PC-9 (cell line): ENCODE measurements at regions of chr2 and their contacts with region 1.

Region 1: GRCh38 chr2:62597323-62597722 is 91.3 kb upstream of the TMEM17 start:
- DNase-seq: no peak
- H3K4me3 ChIP-seq: no peak overlapping the region
- H3K27ac ChIP-seq: no peak overlapping the region
- H3K4me1 ChIP-seq: no peaks in the 10 kb centered on the region
- H3K27me3 ChIP-seq: no peaks in the 10 kb centered on the region
- CTCF ChIP-seq: no peak

Region 2: GRCh38 chr2:62340994-62341484 is 256.3 kb before region 1 on chr2:
- CTCF ChIA-PET with region 1: no interaction called
- POLR2A ChIA-PET with region 1: no interaction called
- intact Hi-C with region 1: no loop called
- DNase-seq: peak; percentile 38 to 42
- H3K4me3 ChIP-seq: no peak overlapping the region
- H3K27ac ChIP-seq: no peak overlapping the region
- H3K4me1 ChIP-seq: peaks cover 22% of the 10 kb centered on the region
- H3K27me3 ChIP-seq: no peaks in the 10 kb centered on the region
- CTCF ChIP-seq: no peak

Region 3: GRCh38 chr2:62550461-62550860 is 46.9 kb before region 1 on chr2:
- CTCF ChIA-PET with region 1: no interaction called
- POLR2A ChIA-PET with region 1: no interaction called
- intact Hi-C with region 1: no loop called
- DNase-seq: no peak
- H3K4me3 ChIP-seq: no peak overlapping the region
- H3K27ac ChIP-seq: no peak overlapping the region
- H3K4me1 ChIP-seq: no peaks in the 10 kb centered on the region
- H3K27me3 ChIP-seq: no peaks in the 10 kb centered on the region
- CTCF ChIP-seq: no peak

Region 4: GRCh38 chr2:62698653-62699052 is 101.3 kb after region 1 on chr2:
- CTCF ChIA-PET with region 1: no interaction called
- POLR2A ChIA-PET with region 1: interaction called, 14 read pairs
- intact Hi-C with region 1: no loop called
- DNase-seq: no peak
- H3K4me3 ChIP-seq: no peak overlapping the region
- H3K27ac ChIP-seq: no peak overlapping the region
- H3K4me1 ChIP-seq: no peaks in the 10 kb centered on the region
- H3K27me3 ChIP-seq: no peaks in the 10 kb centered on the region
- CTCF ChIP-seq: no peak